A549 (cell line): ENCODE measurements at regions of chr1 and their contacts with region 1.

Region 1: GRCh38 chr1:179002552-179003345 is 22.9 kb upstream of the FAM20B start:
- DNase-seq: peak; percentile 49 to 71
- ATAC-seq: peak; percentile 92 to 94
- H3K4me3 ChIP-seq: peak overlapping the region; percentile 16; the same call in 1 of the 3 replicates
- H3K27ac ChIP-seq: peak overlapping the region; percentile 61 to 67
- H3K4me1 ChIP-seq: peaks cover 10% of the 10 kb centered on the region; the same call in 2 of the 3 replicates
- CTCF ChIP-seq: peak; percentile 95
- EP300 ChIP-seq: no peak
- POLR2A ChIP-seq: no peak
- RAD21 ChIP-seq: peak; percentile 96 to 98

Region 2: GRCh38 chr1:178542560-178543356 is 460.0 kb before region 1 on chr1:
- CTCF ChIA-PET with region 1: interaction called, 352 read pairs
- POLR2A ChIA-PET with region 1: interaction called, 7 read pairs
- DNase-seq: peak; percentile 78 to 86
- ATAC-seq: peak; percentile 88 to 91
- H3K4me3 ChIP-seq: peak overlapping the region; percentile 77
- H3K27ac ChIP-seq: peak overlapping the region; percentile 94 to 98
- H3K4me1 ChIP-seq: peaks cover 45% of the 10 kb centered on the region
- CTCF ChIP-seq: peak; percentile 97
- EP300 ChIP-seq: no peak
- POLR2A ChIP-seq: no peak
- RAD21 ChIP-seq: peak; percentile 80 to 95

Region 3: DNA sequence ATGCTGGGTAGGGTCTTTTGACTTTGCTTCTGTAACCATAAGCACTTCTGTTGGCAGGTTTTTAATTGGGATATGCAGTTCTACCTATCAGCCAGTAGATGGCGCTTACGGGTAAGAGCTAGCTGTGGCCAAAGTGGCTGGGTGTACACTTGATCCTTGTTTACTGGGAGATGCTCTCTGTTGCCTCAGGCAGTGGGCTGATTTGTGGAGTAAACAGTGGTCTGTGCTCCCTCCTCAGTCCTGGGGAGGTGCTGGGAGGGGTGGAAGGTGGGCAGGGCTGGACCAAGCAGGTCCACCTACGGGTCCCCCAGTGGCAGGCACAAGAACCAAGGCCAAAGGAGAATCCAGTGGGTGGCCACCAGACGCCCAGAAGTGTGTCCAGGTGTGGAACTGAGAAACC is 234.3 kb before region 1 on chr1:
- CTCF ChIA-PET with region 1: interaction called, 61 read pairs
- POLR2A ChIA-PET with region 1: no interaction called
- DNase-seq: peak in 1 of 2 experiments; percentile 32
- ATAC-seq: peak in 1 of 2 experiments; percentile 33; a peak in 3 of 6 replicates
- H3K4me3 ChIP-seq: no peak overlapping the region
- H3K27ac ChIP-seq: no peak overlapping the region
- H3K4me1 ChIP-seq: no peaks in the 10 kb centered on the region
- CTCF ChIP-seq: peak; percentile 14; the same call in 2 of the 3 replicates
- EP300 ChIP-seq: no peak
- POLR2A ChIP-seq: no peak
- RAD21 ChIP-seq: peak in 1 of 2 experiments; percentile 25; a peak in 2 of 5 replicates

Region 4: GRCh38 chr1:178871551-178872320 is 131.0 kb before region 1 on chr1:
- CTCF ChIA-PET with region 1: interaction called, 11 read pairs
- POLR2A ChIA-PET with region 1: no interaction called
- DNase-seq: no peak
- ATAC-seq: no peak
- H3K4me3 ChIP-seq: no peak overlapping the region
- H3K27ac ChIP-seq: no peak overlapping the region
- H3K4me1 ChIP-seq: peaks cover 37% of the 10 kb centered on the region
- CTCF ChIP-seq: no peak
- EP300 ChIP-seq: no peak
- POLR2A ChIP-seq: no peak
- RAD21 ChIP-seq: no peak

Region 5: DNA sequence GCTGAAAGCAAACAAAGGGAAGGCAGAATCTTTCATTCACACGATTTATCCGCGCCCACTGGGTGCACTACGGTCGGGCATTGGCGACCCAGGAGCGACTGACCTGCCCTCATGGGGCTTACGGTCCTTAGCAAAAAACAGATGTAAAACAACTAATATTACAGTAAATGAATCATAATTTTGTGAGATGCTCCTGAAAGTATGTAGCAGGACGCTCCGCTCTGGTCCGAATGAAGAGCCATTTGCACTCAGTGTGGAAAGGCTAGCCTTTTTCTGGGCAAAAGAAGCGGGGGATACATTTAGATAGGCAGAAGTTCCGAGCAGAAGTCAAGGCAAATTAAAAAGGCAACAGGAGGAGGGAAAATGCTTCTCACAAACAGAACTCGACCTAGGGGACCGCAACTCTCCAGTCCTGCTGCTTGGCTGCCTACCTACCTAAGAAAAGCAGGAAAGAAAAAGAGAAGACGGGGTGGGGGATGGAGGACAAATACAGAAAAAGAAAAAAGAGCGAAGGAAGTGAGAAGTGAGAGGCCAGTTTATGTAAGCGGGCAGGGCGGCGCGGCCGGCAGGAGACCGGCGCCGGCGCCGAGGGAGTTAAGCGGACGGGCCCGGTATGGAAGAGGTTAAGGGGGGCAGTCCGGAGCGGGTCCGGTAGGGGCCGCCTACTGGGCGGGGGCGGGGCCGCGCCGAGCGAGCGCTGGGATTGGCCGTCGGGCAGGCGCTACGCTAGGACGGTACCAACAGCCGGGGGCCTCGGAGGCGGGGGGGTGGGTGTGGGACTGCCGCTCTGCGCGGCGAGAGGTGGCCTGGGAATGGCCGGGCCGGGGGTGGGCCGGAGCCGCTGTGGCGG is 22.6 kb after region 1 on chr1 and contains the start of gene FAM20B:
- CTCF ChIA-PET with region 1: interaction called, 15 read pairs
- POLR2A ChIA-PET with region 1: no interaction called
- DNase-seq: peak; percentile 94 to 95
- ATAC-seq: peak; percentile 91 to 93
- H3K4me3 ChIP-seq: peak within 1 kb of the TSS; percentile 70
- H3K27ac ChIP-seq: peak within 1 kb of the TSS; percentile 96 to 98
- H3K4me1 ChIP-seq: peaks cover 39% of the 10 kb centered on the region
- CTCF ChIP-seq: no peak
- EP300 ChIP-seq: no peak
- POLR2A ChIP-seq: no peak
- RAD21 ChIP-seq: no peak
- polyA plus RNA-seq, gene FAM20B: 34.9 and 35.3 TPM in 2 replicates